T-cell (primary cell): ENCODE measurements at regions of chr1 and their contacts with region 1.

Region 1: DNA sequence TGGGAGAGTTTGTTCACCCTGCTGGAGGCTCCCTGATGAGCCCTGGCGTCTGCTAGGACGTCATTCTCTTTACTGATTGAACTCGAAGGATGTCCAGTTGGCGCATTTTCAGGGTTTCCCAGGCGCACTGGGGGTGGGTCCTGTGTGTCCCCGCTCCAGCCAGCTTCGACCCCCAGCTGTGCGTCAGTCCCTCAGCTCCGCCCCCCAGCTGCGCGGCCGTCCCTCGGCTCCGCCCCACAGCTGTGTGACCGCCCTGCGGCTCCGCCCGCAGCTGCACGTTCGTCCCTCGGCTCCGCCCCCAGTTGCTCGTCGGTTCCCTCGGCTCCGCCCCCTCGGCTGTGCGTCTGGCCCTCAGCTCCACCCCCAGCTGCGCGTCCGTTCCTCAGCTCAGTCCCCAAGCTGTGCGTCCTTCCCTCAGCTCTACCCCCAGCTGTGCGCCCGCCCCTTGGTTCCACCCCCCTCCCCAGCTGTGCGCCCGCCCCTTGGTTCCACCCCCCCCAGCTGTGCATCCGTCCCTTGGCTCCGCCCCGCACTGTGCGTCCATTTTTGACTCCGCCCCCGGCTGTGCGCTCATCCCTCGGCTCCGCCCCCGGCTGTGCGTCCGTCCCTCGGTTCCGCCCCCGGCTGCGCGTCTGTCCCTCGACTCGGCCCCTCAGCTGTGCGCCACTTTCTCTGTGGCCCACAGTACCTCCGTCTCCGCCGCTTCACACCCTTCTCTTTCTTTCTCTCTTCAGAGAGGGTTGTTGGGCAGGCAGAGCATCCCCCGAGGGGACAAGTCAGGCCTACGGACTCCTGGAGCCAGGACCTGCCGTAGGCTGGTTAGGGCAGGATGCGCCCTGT is 61.3 kb downstream of the FAAP20 start:
- DNase-seq: peak; percentile 91 to 99 (median 96)
- ATAC-seq: peak; percentile 88 to 93 (median 90)
- H3K4me3 ChIP-seq: peak overlapping the region; percentile 61 to 66
- H3K4me3 Mint-ChIP-seq: peak overlapping the region; percentile 72 to 87 (median 78)
- H3K27ac ChIP-seq: peak overlapping the region; percentile 80
- H3K27ac Mint-ChIP-seq: peak overlapping the region; percentile 70 to 84
- H3K4me1 ChIP-seq: peaks cover 13 to 30% of the 10 kb centered on the region in 2 experiments
- H3K4me1 Mint-ChIP-seq: peaks cover 12 to 26% (median 25%) of the 10 kb centered on the region in 3 donors
- H3K27me3 ChIP-seq: peaks cover 0 to 3% of the 10 kb centered on the region in 2 experiments
- H3K27me3 Mint-ChIP-seq: no peaks in the 10 kb centered on the region

Region 2: GRCh38 chr1:2174348-2175054 is 41.2 kb after region 1 on chr1:
- CTCF ChIA-PET with region 1: interaction called in 1 of 2 experiments, 10 read pairs
- POLR2A ChIA-PET with region 1: no interaction called
- DNase-seq: peak in 13 of 35 experiments; percentile 20 to 58 (median 31)
- ATAC-seq: peak; percentile 42 to 68 (median 63)
- H3K4me3 ChIP-seq: no peak overlapping the region
- H3K4me3 Mint-ChIP-seq: peak overlapping the region in 1 of 3 donors; percentile 44
- H3K27ac ChIP-seq: no peak overlapping the region
- H3K27ac Mint-ChIP-seq: no peak overlapping the region
- H3K4me1 ChIP-seq: peaks cover 0 to 9% of the 10 kb centered on the region in 2 experiments
- H3K4me1 Mint-ChIP-seq: peaks cover 0 to 7% (median 6%) of the 10 kb centered on the region in 3 donors
- H3K27me3 ChIP-seq: peaks cover 0 to 2% of the 10 kb centered on the region in 2 experiments
- H3K27me3 Mint-ChIP-seq: no peaks in the 10 kb centered on the region

Region 3: DNA sequence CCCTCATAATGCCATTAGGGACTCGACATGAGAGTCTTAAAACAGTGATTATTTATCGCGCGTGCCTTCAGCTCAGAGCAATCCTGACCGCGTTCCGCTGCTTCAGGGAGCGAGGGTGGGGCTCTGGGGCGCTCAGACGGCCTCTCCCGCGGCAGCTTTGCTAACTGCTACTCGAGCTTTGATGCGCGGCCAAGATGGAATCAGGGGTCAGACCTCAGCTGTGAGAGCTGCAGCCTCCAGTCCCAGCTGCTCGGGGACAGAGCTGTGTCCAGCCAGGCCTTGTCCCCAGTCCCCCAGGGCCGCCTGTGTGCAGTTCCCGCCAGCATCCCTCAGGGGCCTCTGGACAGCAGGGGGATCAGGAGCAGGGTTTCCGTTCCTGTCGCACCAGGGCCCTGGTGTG is 772.8 kb after region 1 on chr1:
- CTCF ChIA-PET with region 1: no interaction called
- POLR2A ChIA-PET with region 1: no interaction called
- DNase-seq: no peak
- ATAC-seq: no peak
- H3K4me3 ChIP-seq: no peak overlapping the region
- H3K4me3 Mint-ChIP-seq: no peak overlapping the region
- H3K27ac ChIP-seq: no peak overlapping the region
- H3K27ac Mint-ChIP-seq: no peak overlapping the region
- H3K4me1 ChIP-seq: no peaks in the 10 kb centered on the region
- H3K4me1 Mint-ChIP-seq: no peaks in the 10 kb centered on the region
- H3K27me3 ChIP-seq: peaks cover 0 to 17% of the 10 kb centered on the region in 2 experiments
- H3K27me3 Mint-ChIP-seq: peaks cover 0 to 2% of the 10 kb centered on the region in 2 donors